Activated T-helper 2 cell treated with anti-CD3 and anti-CD28 coated beads, Interferon-gamma antibody, Interleukin-2, Interleukin-4, amounts not matched to agents 10 μg/mL and 5 μg/mL and 100 μg/mL, durations not matched to agents 14 hours and 24 hours and 36 hours (primary cell): ENCODE measurements at regions of chr6 and their contacts with region 1.

Region 1: DNA sequence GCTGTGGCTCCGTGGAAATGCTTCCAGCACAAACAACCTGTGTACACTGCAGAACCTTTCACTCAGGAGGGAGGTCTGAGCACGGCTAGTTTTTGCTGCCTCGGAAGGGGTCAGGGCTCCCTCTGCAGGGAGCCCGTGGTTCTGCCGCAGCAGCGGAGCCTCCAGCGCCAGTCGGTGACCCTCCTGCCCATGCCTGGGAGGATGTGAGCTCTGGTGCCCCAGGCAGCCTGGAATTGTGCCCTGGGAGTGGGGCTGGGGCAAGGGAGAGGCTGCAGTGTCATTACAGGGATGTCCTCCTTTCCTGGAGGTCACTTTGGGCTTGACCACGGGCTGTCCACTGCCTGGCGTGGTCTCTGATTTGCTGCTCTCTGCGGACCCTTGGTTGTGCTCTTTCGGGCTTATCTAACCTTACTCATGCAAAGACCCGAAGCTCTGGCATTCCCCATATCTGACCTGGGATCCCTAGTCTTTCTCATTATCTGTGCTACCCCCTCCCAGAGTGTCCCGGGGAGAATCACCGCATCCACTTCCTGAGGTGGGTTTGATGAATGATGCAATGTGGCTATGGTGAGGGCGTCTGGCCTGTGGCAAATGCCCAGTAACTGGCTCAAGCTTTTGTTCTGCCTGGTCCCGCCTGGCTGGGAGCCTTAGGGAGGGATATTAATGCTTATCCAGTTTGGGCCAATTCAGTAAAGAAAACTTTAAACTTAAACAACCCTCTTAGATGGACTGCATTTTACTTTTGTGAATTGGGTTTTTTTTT is 59.6 kb upstream of the TAGAP start:
- DNase-seq: peak; percentile 69
- H3K4me3 Mint-ChIP-seq: peak overlapping the region; percentile 11
- H3K27ac Mint-ChIP-seq: peak overlapping the region; percentile 79
- H3K4me1 Mint-ChIP-seq: peaks cover 75% of the 10 kb centered on the region
- H3K27me3 Mint-ChIP-seq: no peaks in the 10 kb centered on the region

Region 2: DNA sequence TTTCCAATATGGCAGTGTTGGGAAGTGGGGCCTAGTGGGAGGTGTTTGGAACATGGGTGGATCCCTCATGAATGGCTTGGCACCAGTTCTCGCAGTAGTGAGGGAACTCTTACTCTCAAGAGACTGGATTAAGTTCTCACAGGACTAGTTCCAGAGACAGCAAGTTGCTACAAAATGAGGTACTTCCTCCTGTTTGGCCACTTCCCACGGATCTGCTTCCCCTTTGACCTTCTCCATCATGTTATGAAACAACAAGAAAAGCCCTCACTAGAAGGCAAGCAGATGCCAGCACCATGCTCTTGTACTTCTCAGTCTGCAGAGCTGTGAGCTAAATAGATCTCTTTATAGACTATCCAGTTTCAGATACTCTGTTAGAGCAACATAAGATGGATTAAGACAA is 107.5 kb before region 1 on chr6:
- intact Hi-C with region 1: no loop called
- DNase-seq: no peak
- H3K4me3 Mint-ChIP-seq: no peak overlapping the region
- H3K27ac Mint-ChIP-seq: peak overlapping the region; percentile 16
- H3K4me1 Mint-ChIP-seq: peaks cover 36% of the 10 kb centered on the region
- H3K27me3 Mint-ChIP-seq: no peaks in the 10 kb centered on the region

Region 3: GRCh38 chr6:159008656-159009288 is 95.6 kb before region 1 on chr6:
- intact Hi-C with region 1: loop called (anchors 1 kb)
- DNase-seq: no peak
- H3K4me3 Mint-ChIP-seq: no peak overlapping the region
- H3K27ac Mint-ChIP-seq: no peak overlapping the region
- H3K4me1 Mint-ChIP-seq: peaks cover 35% of the 10 kb centered on the region
- H3K27me3 Mint-ChIP-seq: no peaks in the 10 kb centered on the region

Region 4: GRCh38 chr6:159017757-159018559 is 86.4 kb before region 1 on chr6:
- intact Hi-C with region 1: loop called (anchors 2 kb)
- DNase-seq: no peak
- H3K4me3 Mint-ChIP-seq: peak overlapping the region; percentile 1
- H3K27ac Mint-ChIP-seq: peak overlapping the region; percentile 84
- H3K4me1 Mint-ChIP-seq: peaks cover 45% of the 10 kb centered on the region
- H3K27me3 Mint-ChIP-seq: no peaks in the 10 kb centered on the region

Region 5: DNA sequence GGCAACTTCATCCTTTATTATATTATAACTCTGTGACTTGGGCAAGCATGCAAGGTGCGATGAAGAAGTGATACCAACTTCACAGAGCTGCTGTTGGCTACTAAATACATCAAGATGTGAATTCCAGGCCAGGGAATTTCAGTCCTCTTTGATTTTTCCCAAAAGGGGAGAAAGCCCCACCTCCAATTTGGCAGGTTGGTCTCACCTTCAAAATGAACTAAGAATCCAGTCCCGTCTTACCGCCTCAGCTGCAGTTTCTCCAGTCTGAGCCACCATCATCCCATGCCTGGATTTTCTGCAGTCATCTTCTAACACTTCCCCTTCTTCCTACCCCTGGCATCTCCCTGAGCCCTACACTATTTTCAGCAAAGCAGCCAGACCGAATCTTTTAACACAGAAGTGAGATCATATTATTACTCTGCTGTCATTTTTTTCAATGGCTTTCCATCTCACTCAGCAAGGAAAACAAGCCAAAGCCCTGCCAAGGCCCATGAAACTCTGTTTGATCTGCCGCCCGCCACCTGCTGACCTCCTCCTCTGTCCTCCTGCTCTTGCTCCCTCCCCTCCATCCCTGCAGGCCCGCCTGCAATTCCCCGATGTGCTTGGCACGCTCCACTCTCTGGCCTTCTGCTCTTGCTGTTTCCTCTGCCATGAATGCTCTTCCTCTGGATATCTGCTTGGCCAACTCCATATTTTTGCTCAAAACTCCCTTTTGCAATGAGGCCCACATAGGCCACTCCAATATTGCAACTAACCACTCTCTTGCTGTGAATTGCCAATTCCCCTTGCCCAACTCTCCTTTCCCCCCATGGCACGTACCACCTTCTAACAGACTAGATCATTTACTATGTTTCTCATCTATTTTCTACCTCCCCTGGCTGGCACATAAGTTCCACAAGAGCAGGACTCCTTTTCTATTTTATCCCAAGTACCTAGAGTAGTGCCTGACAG is 13.5 kb before region 1 on chr6:
- intact Hi-C with region 1: no loop called
- DNase-seq: no peak
- H3K4me3 Mint-ChIP-seq: no peak overlapping the region
- H3K27ac Mint-ChIP-seq: no peak overlapping the region
- H3K4me1 Mint-ChIP-seq: peaks cover 48% of the 10 kb centered on the region
- H3K27me3 Mint-ChIP-seq: no peaks in the 10 kb centered on the region

Region 6: DNA sequence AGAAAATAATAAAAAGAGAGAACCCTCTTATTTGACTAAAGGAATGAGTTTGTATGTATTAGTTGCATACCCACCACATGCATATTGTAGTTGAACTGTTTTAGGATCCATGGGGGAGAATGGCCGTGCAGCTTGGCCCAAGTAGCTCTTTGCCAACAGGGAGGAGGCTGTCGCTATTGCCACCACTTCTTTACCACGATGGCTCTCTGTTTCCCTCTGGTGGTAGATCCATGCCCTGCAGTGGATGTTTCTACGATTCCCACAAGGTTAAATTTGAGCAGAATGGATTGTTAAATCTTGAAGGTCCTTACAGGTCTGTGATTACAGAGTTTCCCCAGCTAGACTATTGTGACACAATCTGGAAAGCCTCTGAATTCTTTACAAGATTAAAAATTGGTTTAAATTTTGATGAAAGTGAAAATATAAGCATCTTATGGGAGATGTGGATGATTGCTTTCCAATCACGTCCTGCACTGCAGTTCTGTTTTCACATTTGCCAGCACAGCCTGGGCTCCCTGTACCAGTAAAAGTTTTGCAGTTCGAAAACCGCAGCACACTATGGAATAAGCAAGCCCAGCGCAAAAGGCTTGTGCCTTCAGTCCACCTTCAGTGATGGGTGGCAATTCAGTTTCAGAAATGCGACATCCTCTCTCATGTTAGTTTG is 30.5 kb after region 1 on chr6:
- intact Hi-C with region 1: loop called (anchors 1 kb)
- DNase-seq: peak; percentile 64
- H3K4me3 Mint-ChIP-seq: no peak overlapping the region
- H3K27ac Mint-ChIP-seq: no peak overlapping the region
- H3K4me1 Mint-ChIP-seq: peaks cover 4% of the 10 kb centered on the region
- H3K27me3 Mint-ChIP-seq: peaks cover 23% of the 10 kb centered on the region